ENCODE measurements at regions of chr6 and their contacts with region 1.

Region 1: GRCh38 chr6:148177589-148178233 is 164.9 kb upstream of the SASH1 start:
- DNase-seq: peak; percentile 44 to 61 (median 54)
- ATAC-seq: peak; percentile 65 to 81 (median 70)
- H3K4me3 ChIP-seq: no peak overlapping the region
- H3K27ac ChIP-seq: no peak overlapping the region
- H3K4me1 ChIP-seq: no peaks in the 10 kb centered on the region
- H3K27me3 ChIP-seq: no peaks in the 10 kb centered on the region
- CTCF ChIP-seq: peak; percentile 71 to 84 (median 74)
- POLR2A ChIP-seq: no peak

Region 2: GRCh38 chr6:148464319-148465010 is 286.8 kb after region 1 on chr6:
- intact Hi-C with region 1: loop called in 1 of 2 experiments (anchors 10 kb)
- DNase-seq: peak in 1 of 3 donors; percentile 30
- ATAC-seq: peak; percentile 72 to 81 (median 79)
- H3K4me3 ChIP-seq: no peak overlapping the region
- H3K27ac ChIP-seq: no peak overlapping the region
- H3K4me1 ChIP-seq: peaks cover 0 to 14% (median 2%) of the 10 kb centered on the region in 4 donors
- H3K27me3 ChIP-seq: no peaks in the 10 kb centered on the region
- CTCF ChIP-seq: peak; percentile 88 to 95 (median 92)
- POLR2A ChIP-seq: no peak

Region 3: GRCh38 chr6:148471624-148472159 is 294.0 kb after region 1 on chr6:
- intact Hi-C with region 1: loop called (anchors 10 kb)
- DNase-seq: no peak
- ATAC-seq: no peak
- H3K4me3 ChIP-seq: no peak overlapping the region
- H3K27ac ChIP-seq: no peak overlapping the region
- H3K4me1 ChIP-seq: no peaks in the 10 kb centered on the region
- H3K27me3 ChIP-seq: no peaks in the 10 kb centered on the region
- CTCF ChIP-seq: no peak
- POLR2A ChIP-seq: no peak